ENCODE measurements at regions of chr11 and their contacts with region 1.

Region 1: DNA sequence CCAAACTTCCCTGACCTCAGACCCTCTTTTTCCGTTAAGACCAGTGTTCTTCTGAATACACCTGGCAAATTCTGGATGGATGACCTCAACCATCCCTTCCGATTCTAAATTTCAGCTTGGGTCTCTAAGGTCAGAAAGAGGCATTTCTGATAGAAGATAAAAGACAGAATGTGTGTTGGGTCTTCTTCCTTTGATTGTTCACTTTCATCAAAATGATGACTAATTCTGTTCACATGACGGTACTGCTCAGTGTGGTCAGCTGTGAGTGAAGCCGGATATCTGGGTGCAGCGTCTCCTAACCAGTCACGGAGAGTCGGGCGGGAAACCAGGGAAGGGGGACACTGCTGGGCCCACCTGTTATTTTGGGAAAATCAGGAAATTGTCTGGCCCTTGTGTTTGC is 151.6 kb upstream of the NAV2 start:
- DNase-seq: no peak
- ATAC-seq: no peak
- H3K4me3 Mint-ChIP-seq: no peak overlapping the region
- H3K27ac Mint-ChIP-seq: no peak overlapping the region
- H3K4me1 Mint-ChIP-seq: no peaks in the 10 kb centered on the region
- H3K27me3 Mint-ChIP-seq: peaks cover 36% of the 10 kb centered on the region

Region 2: GRCh38 chr11:19742588-19743292 is 181.7 kb after region 1 on chr11:
- CTCF ChIA-PET with region 1: interaction called, 46 read pairs
- DNase-seq: peak; percentile 77
- ATAC-seq: peak; percentile 77
- H3K4me3 Mint-ChIP-seq: no peak overlapping the region
- H3K27ac Mint-ChIP-seq: no peak overlapping the region
- H3K4me1 Mint-ChIP-seq: no peaks in the 10 kb centered on the region
- H3K27me3 Mint-ChIP-seq: peaks cover 7% of the 10 kb centered on the region

Region 3: DNA sequence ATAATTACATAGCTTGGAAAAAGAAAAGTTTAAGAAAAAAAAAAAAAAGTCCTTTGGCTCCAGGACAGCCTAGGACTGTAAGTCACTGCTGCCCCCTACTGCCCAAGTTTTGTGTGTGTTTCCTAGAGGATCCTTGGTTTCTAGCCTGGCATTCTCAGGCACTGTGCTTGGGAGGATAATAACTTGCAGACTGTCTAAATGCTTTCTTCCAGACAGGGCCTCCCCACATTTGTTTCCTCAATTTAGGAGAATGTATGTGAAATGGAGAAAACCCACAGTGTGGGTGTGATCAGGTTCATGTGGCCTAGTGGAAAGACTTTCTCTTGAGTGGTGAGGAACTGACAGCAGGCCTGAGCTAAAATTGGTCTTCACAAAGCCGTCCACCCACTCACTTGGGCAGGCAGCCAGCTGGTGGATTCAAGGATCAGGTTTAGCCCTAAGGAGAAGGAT is 342.6 kb after region 1 on chr11:
- CTCF ChIA-PET with region 1: interaction called, 10 read pairs
- DNase-seq: peak; percentile 66
- ATAC-seq: peak; percentile 60
- H3K4me3 Mint-ChIP-seq: no peak overlapping the region
- H3K27ac Mint-ChIP-seq: no peak overlapping the region
- H3K4me1 Mint-ChIP-seq: no peaks in the 10 kb centered on the region
- H3K27me3 Mint-ChIP-seq: peaks cover 5% of the 10 kb centered on the region